Posterior cingulate gyrus (tissue), 11 donors: ENCODE measurements at regions of chrX and their contacts with region 1.

Region 1: GRCh38 chrX:102712952-102713625 is 841 bp downstream of the GPRASP2 start:
- DNase-seq: peak in 7 of 10 donors; percentile 37 to 94 (median 56)

Region 2: GRCh38 chrX:102185967-102186720 is 526.9 kb before region 1 on chrX:
- intact Hi-C with region 1: no loop called
- DNase-seq: no peak

Region 3: GRCh38 chrX:102546828-102547493 is 166.1 kb before region 1 on chrX:
- intact Hi-C with region 1: no loop called
- DNase-seq: peak in 6 of 10 donors; percentile 6 to 87 (median 16)

Region 4: GRCh38 chrX:102599084-102599950 is 113.8 kb before region 1 on chrX and contains the start of gene ARMCX5:
- intact Hi-C with region 1: loop called (anchors 10 kb)
- DNase-seq: peak; percentile 39 to 94 (median 55)

Region 5: GRCh38 chrX:102610905-102611304 is 102.2 kb before region 1 on chrX:
- intact Hi-C with region 1: no loop called
- DNase-seq: peak in 2 of 10 donors; percentile 28 to 59

Region 6: GRCh38 chrX:102652031-102652688 is 60.9 kb before region 1 on chrX:
- intact Hi-C with region 1: loop called (anchors 5 kb)
- DNase-seq: peak in 7 of 10 donors; percentile 24 to 92 (median 52)

Region 7: GRCh38 chrX:102883176-102883915 is 170.3 kb after region 1 on chrX:
- intact Hi-C with region 1: no loop called
- DNase-seq: no peak